CD4-positive, alpha-beta T cell (primary cell): ENCODE measurements at regions of chr2 and their contacts with region 1.

Region 1: GRCh38 chr2:241217320-241218031 is 29.0 kb downstream of the ANO7 start:
- DNase-seq: peak in 8 of 14 experiments; percentile 8 to 71 (median 20)
- ATAC-seq: peak; percentile 33
- H3K4me3 ChIP-seq: peak overlapping the region; percentile 52
- H3K4me3 Mint-ChIP-seq: peak overlapping the region; percentile 88
- H3K27ac ChIP-seq: no peak overlapping the region
- H3K27ac Mint-ChIP-seq: peak overlapping the region; percentile 80
- H3K4me1 ChIP-seq: peaks cover 13% of the 10 kb centered on the region
- H3K4me1 Mint-ChIP-seq: peaks cover 23% of the 10 kb centered on the region
- H3K27me3 ChIP-seq: no peaks in the 10 kb centered on the region
- H3K27me3 Mint-ChIP-seq: no peaks in the 10 kb centered on the region
- CTCF ChIP-seq: no peak

Region 2: GRCh38 chr2:241087420-241088268 is 129.8 kb before region 1 on chr2:
- CTCF ChIA-PET with region 1: no interaction called
- POLR2A ChIA-PET with region 1: no interaction called
- intact Hi-C with region 1: loop called in 1 of 2 experiments (anchors 10 kb)
- DNase-seq: peak in 2 of 14 experiments; percentile 7 to 20
- ATAC-seq: no peak
- H3K4me3 ChIP-seq: no peak overlapping the region
- H3K4me3 Mint-ChIP-seq: no peak overlapping the region
- H3K27ac ChIP-seq: no peak overlapping the region
- H3K27ac Mint-ChIP-seq: peak overlapping the region; percentile 75
- H3K4me1 ChIP-seq: no peaks in the 10 kb centered on the region
- H3K4me1 Mint-ChIP-seq: peaks cover 23% of the 10 kb centered on the region
- H3K27me3 ChIP-seq: no peaks in the 10 kb centered on the region
- H3K27me3 Mint-ChIP-seq: no peaks in the 10 kb centered on the region
- CTCF ChIP-seq: no peak